ENCODE measurements at regions of chr3 and their contacts with region 1.

Region 1: GRCh38 chr3:149657926-149658733 is at the start of gene WWTR1:
- DNase-seq: peak; percentile 92 to 96
- ATAC-seq: peak; percentile 80 to 87
- H3K4me3 ChIP-seq: peak within 1 kb of the TSS; percentile 90
- H3K27ac ChIP-seq: peak within 1 kb of the TSS; percentile 99
- H3K4me1 ChIP-seq: peaks cover 57% of the 10 kb centered on the region
- CTCF ChIP-seq: no peak
- EP300 ChIP-seq: no peak
- POLR2A ChIP-seq: peak; percentile 66
- RAD21 ChIP-seq: peak; percentile 1 to 27; a peak in 1 of 5 replicates
- polyA plus RNA-seq, gene WWTR1: 164 and 216 TPM in 2 replicates

Region 2: DNA sequence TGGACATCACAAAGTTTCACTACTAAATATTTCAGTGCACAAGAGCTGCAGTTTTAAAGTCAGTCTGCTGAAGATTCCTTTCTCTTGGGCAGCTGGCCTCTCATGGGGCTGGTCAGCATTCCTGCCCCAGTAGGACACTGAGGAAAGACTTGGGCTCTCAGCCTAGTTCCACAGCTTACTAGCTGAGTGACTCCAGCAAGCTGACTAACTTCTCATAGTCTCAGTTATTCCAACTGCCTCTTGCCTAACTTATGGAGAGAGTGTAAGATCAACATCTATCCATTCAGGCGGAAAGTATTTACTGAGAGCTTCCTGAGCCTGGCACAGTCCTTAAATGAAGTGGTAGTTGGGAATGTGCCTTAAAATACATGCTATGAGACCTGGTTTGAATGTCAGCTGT is 156.6 kb before region 1 on chr3:
- CTCF ChIA-PET with region 1: no interaction called
- POLR2A ChIA-PET with region 1: no interaction called
- DNase-seq: no peak
- ATAC-seq: peak in 1 of 2 experiments; percentile 21; a peak in 1 of 6 replicates
- H3K4me3 ChIP-seq: no peak overlapping the region
- H3K27ac ChIP-seq: no peak overlapping the region
- H3K4me1 ChIP-seq: peaks cover 2% of the 10 kb centered on the region; the same call in 1 of the 3 replicates
- CTCF ChIP-seq: no peak
- EP300 ChIP-seq: no peak
- POLR2A ChIP-seq: no peak
- RAD21 ChIP-seq: no peak

Region 3: DNA sequence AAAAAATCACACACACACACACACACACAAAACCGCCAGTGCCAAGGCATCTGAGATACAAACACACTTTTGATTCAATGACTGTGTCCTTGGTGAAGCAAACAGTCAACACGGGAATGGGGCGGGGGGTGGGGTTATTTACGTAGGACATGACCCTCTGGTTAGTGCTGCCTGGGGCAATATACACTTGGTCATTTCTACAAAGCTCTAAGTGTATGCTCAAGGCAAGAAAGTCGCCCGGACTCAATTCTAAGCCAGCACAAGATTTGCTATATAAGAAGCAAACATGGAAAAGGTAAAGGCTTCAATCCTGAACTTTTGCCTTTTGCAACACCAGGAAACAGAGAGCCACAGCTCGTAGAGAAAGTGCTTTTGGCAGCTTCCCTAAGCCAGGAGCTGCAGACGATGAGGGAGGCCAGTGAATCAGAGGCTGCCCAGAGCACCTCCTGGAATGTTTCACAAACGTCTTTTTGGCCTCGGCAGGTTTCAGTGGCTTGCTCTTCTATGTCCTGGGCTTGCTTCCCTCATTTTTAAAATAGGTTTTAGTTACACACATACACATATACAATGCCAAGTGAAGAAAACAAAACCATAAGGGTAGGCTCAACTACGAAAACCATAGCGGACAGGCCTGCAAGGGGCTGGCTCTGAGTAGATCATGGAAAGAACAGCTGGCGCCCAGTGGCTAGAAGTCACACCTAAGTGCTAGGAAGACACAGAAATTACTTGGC is 110.0 kb before region 1 on chr3:
- CTCF ChIA-PET with region 1: interaction called, 8 read pairs
- POLR2A ChIA-PET with region 1: interaction called, 17 read pairs
- DNase-seq: peak; percentile 87 to 95
- ATAC-seq: peak; percentile 93 to 97
- H3K4me3 ChIP-seq: peak overlapping the region; percentile 21; the same call in 2 of the 3 replicates
- H3K27ac ChIP-seq: peak overlapping the region; percentile 92 to 93
- H3K4me1 ChIP-seq: peaks cover 86% of the 10 kb centered on the region
- CTCF ChIP-seq: no peak
- EP300 ChIP-seq: peak; percentile 78 to 91; a peak in 4 of 5 replicates
- POLR2A ChIP-seq: no peak
- RAD21 ChIP-seq: peak in 1 of 2 experiments; percentile 47; a peak in 3 of 5 replicates

Region 4: GRCh38 chr3:149575961-149576564 is 82.1 kb before region 1 on chr3:
- CTCF ChIA-PET with region 1: interaction called, 10 read pairs
- POLR2A ChIA-PET with region 1: interaction called, 45 read pairs
- DNase-seq: peak; percentile 62 to 89
- ATAC-seq: peak; percentile 87 to 88
- H3K4me3 ChIP-seq: peak overlapping the region; percentile 15; the same call in 2 of the 3 replicates
- H3K27ac ChIP-seq: peak overlapping the region; percentile 94
- H3K4me1 ChIP-seq: peaks cover 98% of the 10 kb centered on the region
- CTCF ChIP-seq: no peak
- EP300 ChIP-seq: peak; percentile 80 to 91; a peak in 3 of 5 replicates
- POLR2A ChIP-seq: no peak
- RAD21 ChIP-seq: peak; percentile 33 to 49

Region 5: GRCh38 chr3:149589332-149589731 is 68.8 kb before region 1 on chr3:
- CTCF ChIA-PET with region 1: interaction called, 6 read pairs
- POLR2A ChIA-PET with region 1: interaction called, 10 read pairs
- DNase-seq: no peak
- ATAC-seq: peak in 1 of 2 experiments; percentile 33; a peak in 1 of 6 replicates
- H3K4me3 ChIP-seq: no peak overlapping the region
- H3K27ac ChIP-seq: peak overlapping the region; percentile 72 to 88; a peak in 5 of 6 replicates
- H3K4me1 ChIP-seq: peaks cover 93% of the 10 kb centered on the region
- CTCF ChIP-seq: no peak
- EP300 ChIP-seq: no peak
- POLR2A ChIP-seq: no peak
- RAD21 ChIP-seq: no peak

Region 6: GRCh38 chr3:149646181-149646766 is 11.9 kb before region 1 on chr3:
- CTCF ChIA-PET with region 1: interaction called, 6 read pairs
- POLR2A ChIA-PET with region 1: interaction called, 26 read pairs
- DNase-seq: peak in 1 of 2 experiments; percentile 41
- ATAC-seq: peak; percentile 47 to 49; a peak in 3 of 6 replicates
- H3K4me3 ChIP-seq: no peak overlapping the region
- H3K27ac ChIP-seq: no peak overlapping the region
- H3K4me1 ChIP-seq: peaks cover 58% of the 10 kb centered on the region
- CTCF ChIP-seq: no peak
- EP300 ChIP-seq: no peak
- POLR2A ChIP-seq: no peak
- RAD21 ChIP-seq: no peak

Region 7: GRCh38 chr3:150194513-150194912 is 536.4 kb after region 1 on chr3:
- CTCF ChIA-PET with region 1: no interaction called
- POLR2A ChIA-PET with region 1: no interaction called
- DNase-seq: no peak
- ATAC-seq: no peak
- H3K4me3 ChIP-seq: no peak overlapping the region
- H3K27ac ChIP-seq: no peak overlapping the region
- H3K4me1 ChIP-seq: no peaks in the 10 kb centered on the region
- CTCF ChIP-seq: no peak
- EP300 ChIP-seq: no peak
- POLR2A ChIP-seq: no peak
- RAD21 ChIP-seq: no peak

Measured in A549 (cell line).